Activated CD4-positive, alpha-beta T cell treated with anti-CD3 and anti-CD28 coated beads for 36 hours (primary cell): ENCODE measurements at regions of chr6 and their contacts with region 1.

Region 1: DNA sequence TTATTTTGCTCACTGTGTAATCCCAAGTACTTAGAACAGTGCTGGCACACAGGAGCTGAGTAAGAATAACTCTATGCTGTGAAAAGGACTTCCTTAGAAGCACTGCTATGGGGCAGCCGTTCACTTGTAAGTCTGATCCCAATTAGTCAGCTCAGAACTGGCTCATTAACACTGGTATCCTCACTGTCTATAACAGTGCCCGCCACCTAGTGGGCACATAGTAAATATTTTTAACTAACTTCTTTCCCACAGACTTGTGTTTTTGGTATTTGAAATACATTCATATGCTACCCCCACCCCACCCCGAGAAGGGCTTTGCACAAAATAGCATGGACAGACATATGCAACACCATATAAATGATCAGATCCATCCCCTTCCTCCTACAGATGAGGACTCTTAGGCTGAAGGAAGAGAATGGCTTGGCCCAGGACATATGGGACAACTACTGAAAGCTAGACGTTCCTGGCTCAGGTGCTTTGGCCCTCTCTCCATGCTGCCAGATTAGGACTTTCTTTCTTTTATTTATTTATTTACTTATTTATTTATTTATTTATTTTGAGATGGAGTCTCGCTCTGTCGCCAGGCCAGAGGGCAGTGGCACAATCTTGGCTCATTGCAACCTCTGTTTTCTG is 47.1 kb downstream of the DST start:
- DNase-seq: peak; percentile 72
- ATAC-seq: peak; percentile 65
- H3K4me3 Mint-ChIP-seq: no peak overlapping the region
- H3K27ac Mint-ChIP-seq: no peak overlapping the region
- H3K4me1 Mint-ChIP-seq: peaks cover 34% of the 10 kb centered on the region
- H3K27me3 Mint-ChIP-seq: no peaks in the 10 kb centered on the region

Region 2: DNA sequence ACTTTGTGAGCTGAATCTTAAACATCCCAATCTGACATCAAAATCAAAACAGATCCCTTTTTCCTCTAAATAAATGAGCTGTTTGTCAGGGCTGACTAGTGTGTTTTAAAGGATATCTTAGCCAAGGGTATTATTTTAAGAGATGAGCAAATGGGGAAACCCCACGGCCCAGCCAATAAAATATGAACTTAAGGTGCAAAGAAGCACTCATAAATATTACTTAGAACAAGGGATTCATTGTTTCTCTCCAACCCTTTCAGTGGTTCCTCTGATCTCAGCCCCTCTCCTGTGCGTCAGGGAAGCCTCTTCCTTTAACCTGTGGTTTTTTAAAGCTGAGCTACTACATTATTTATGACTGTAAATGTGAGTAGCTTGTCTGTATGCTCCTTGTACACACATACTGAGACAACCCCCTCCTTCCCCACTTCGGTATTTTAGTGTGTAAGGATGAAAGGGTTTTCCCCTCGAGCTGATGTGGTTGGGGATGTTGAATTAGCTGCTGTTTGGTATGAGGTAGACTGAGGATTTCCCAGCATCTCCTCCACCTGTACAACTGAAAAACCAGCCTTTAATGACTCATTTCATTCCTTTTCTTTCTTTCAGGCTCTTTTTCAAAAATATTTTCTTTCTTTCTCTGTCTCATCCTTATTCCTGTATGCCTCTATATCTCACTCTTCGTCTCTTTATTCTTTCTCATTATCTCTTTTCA is 726.7 kb before region 1 on chr6:
- CTCF ChIA-PET with region 1: no interaction called
- POLR2A ChIA-PET with region 1: no interaction called
- intact Hi-C with region 1: loop called in 1 of 2 experiments (anchors 5 kb)
- DNase-seq: peak; percentile 61
- ATAC-seq: peak; percentile 98
- H3K4me3 Mint-ChIP-seq: no peak overlapping the region
- H3K27ac Mint-ChIP-seq: peak overlapping the region; percentile 47
- H3K4me1 Mint-ChIP-seq: peaks cover 10% of the 10 kb centered on the region
- H3K27me3 Mint-ChIP-seq: peaks cover 2% of the 10 kb centered on the region

Region 3: GRCh38 chr6:56314683-56315523 is 280.7 kb before region 1 on chr6:
- CTCF ChIA-PET with region 1: no interaction called
- POLR2A ChIA-PET with region 1: no interaction called
- intact Hi-C with region 1: loop called in 1 of 2 experiments (anchors 1 kb)
- DNase-seq: peak; percentile 22
- ATAC-seq: no peak
- H3K4me3 Mint-ChIP-seq: no peak overlapping the region
- H3K27ac Mint-ChIP-seq: no peak overlapping the region
- H3K4me1 Mint-ChIP-seq: no peaks in the 10 kb centered on the region
- H3K27me3 Mint-ChIP-seq: no peaks in the 10 kb centered on the region

Region 4: GRCh38 chr6:56459025-56459810 is 136.4 kb before region 1 on chr6:
- CTCF ChIA-PET with region 1: no interaction called
- POLR2A ChIA-PET with region 1: no interaction called
- intact Hi-C with region 1: loop called in 1 of 2 experiments (anchors 5 kb)
- DNase-seq: no peak
- ATAC-seq: no peak
- H3K4me3 Mint-ChIP-seq: no peak overlapping the region
- H3K27ac Mint-ChIP-seq: peak overlapping the region; percentile 48
- H3K4me1 Mint-ChIP-seq: peaks cover 12% of the 10 kb centered on the region
- H3K27me3 Mint-ChIP-seq: no peaks in the 10 kb centered on the region

Region 5: DNA sequence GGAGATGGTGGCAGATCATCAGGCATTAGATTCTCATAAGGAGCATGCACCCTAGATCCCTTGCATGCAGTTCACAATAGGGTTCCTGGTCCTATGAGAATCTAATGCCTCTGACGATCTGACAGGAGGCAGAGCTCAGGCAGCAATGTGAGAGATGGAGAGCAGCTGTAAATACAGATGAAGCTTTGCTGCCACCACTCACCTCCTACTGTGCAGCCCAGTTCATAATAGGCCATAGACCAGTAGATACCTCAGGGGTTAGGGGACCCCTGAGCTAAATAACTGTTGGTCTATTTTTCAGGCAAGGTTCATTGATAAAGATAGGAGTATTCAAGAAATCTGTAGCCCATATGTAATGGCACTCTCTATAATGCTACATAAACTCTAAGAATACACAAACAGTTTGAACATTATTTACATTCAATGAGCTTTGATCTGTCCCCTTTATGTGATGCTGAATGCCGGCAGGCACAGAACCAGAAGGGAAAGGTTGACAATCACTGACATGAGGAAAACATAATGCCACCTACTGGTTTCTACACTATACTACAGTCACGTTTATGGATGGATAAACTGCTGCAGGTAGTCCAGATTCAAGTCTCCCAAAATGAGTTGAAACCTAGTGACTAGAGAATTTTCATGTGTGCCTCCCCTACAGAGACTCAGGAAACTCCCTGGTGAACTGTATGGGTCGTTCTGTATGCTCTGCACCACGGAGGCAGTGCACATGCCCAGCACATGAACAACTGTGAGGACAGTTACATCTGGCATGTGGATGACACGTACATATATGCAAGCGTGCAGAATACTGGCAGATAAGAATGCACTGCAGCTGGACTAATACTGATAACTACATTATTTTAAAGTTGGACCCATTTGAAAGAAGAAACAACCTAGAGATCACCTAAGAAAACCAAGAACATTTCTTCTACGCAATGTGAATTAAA is 24.9 kb before region 1 on chr6:
- CTCF ChIA-PET with region 1: interaction called, 33 read pairs
- POLR2A ChIA-PET with region 1: no interaction called
- intact Hi-C with region 1: no loop called
- DNase-seq: peak; percentile 9
- ATAC-seq: peak; percentile 70
- H3K4me3 Mint-ChIP-seq: no peak overlapping the region
- H3K27ac Mint-ChIP-seq: no peak overlapping the region
- H3K4me1 Mint-ChIP-seq: no peaks in the 10 kb centered on the region
- H3K27me3 Mint-ChIP-seq: no peaks in the 10 kb centered on the region

Region 6: DNA sequence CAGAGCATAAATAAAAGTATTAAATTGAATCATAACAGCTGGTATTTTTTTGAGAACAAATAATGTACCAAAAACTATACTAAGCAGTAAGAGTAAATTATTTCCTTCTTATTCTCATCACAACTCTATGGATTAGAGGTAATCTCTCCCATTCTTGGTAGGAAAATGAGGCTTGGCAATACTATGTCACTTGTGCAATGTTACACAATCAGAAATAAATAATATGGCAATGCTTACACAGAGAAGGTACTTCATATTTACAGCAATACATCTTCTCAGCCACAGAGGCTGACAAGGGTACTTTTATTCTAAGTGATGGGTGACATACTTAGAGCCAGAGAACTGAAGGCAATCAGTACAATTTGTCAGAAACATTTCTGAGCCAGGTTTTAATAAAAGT is 43.2 kb after region 1 on chr6:
- CTCF ChIA-PET with region 1: no interaction called
- POLR2A ChIA-PET with region 1: no interaction called
- intact Hi-C with region 1: no loop called
- DNase-seq: no peak
- ATAC-seq: no peak
- H3K4me3 Mint-ChIP-seq: no peak overlapping the region
- H3K27ac Mint-ChIP-seq: no peak overlapping the region
- H3K4me1 Mint-ChIP-seq: no peaks in the 10 kb centered on the region
- H3K27me3 Mint-ChIP-seq: no peaks in the 10 kb centered on the region